Esophagus squamous epithelium (tissue), 5 donors: ENCODE measurements at regions of chr12 and their contacts with region 1.

Region 1: DNA sequence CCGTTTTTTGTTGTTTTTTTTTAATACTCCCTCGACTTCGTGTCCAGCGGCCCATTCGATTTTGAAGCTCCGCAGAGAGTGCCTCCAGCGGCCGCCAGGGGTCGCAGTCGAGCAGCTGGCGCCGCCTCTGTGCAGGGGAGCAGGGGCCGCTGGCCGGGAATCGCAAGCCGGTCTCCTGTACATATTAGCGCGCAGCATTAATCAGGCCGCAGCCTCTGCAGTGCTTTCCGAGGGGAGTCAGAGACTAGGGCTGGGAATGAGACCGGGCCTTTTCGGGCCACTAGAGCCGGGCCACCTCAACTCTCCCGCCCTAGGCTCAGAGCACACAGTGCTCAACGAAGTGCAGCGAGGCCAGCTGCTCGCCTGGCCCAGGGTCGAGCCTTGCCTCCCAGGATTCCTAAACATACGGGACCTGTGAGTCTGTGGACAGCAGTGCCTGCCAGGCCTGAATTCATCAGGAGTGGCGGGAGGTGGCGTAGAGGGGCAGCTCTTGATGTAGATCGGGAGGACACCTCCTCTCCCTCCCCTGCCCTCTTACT is 81.8 kb downstream of the EMP1 start:
- DNase-seq: no peak
- H3K4me3 ChIP-seq: peak overlapping the region in 1 of 4 donors; percentile 47
- H3K27ac ChIP-seq: no peak overlapping the region
- H3K4me1 ChIP-seq: peaks cover 0 to 9% (median 7%) of the 10 kb centered on the region in 3 donors
- H3K27me3 ChIP-seq: peaks cover 0 to 46% (median 0%) of the 10 kb centered on the region in 4 donors
- CTCF ChIP-seq: peak; percentile 77 to 99 (median 92)
- POLR2A ChIP-seq: no peak

Region 2: GRCh38 chr12:13534645-13535398 is 256.5 kb after region 1 on chr12:
- intact Hi-C with region 1: loop called (anchors 10 kb)
- DNase-seq: no peak
- H3K4me3 ChIP-seq: peak overlapping the region in 1 of 4 donors; percentile 24
- H3K27ac ChIP-seq: no peak overlapping the region
- H3K4me1 ChIP-seq: no peaks in the 10 kb centered on the region
- H3K27me3 ChIP-seq: no peaks in the 10 kb centered on the region
- CTCF ChIP-seq: peak; percentile 39 to 71 (median 67)
- POLR2A ChIP-seq: no peak

Region 3: GRCh38 chr12:13661005-13661887 is 382.9 kb after region 1 on chr12:
- intact Hi-C with region 1: loop called (anchors 10 kb)
- DNase-seq: no peak
- H3K4me3 ChIP-seq: no peak overlapping the region
- H3K27ac ChIP-seq: no peak overlapping the region
- H3K4me1 ChIP-seq: no peaks in the 10 kb centered on the region
- H3K27me3 ChIP-seq: peaks cover 0 to 4% (median 0%) of the 10 kb centered on the region in 4 donors
- CTCF ChIP-seq: peak; percentile 56 to 73 (median 68)
- POLR2A ChIP-seq: no peak